Ovary (tissue), 10 donors: ENCODE measurements at regions of chr17 and their contacts with region 1.

Region 1: GRCh38 chr17:77420804-77421629 is 280.2 kb downstream of the SEC14L1 start:
- DNase-seq: peak; percentile 77 to 82 (median 80)
- H3K4me3 ChIP-seq: no peak overlapping the region
- H3K27ac ChIP-seq: peak overlapping the region; percentile 61 to 80
- H3K4me1 ChIP-seq: peaks cover 34% of the 10 kb centered on the region
- H3K27me3 ChIP-seq: no peaks in the 10 kb centered on the region
- CTCF ChIP-seq: no peak
- EP300 ChIP-seq: no peak
- POLR2A ChIP-seq: peak; percentile 7

Region 2: GRCh38 chr17:77372444-77373298 is 48.3 kb before region 1 on chr17:
- intact Hi-C with region 1: loop called in 3 of 4 experiments (anchors 5 to 10 kb)
- DNase-seq: peak; percentile 87 to 93 (median 90)
- H3K4me3 ChIP-seq: peak overlapping the region; percentile 73
- H3K27ac ChIP-seq: peak overlapping the region; percentile 77 to 89
- H3K4me1 ChIP-seq: peaks cover 41% of the 10 kb centered on the region
- H3K27me3 ChIP-seq: no peaks in the 10 kb centered on the region
- CTCF ChIP-seq: peak in 1 of 3 donors; percentile 12
- EP300 ChIP-seq: no peak
- POLR2A ChIP-seq: no peak

Region 3: DNA sequence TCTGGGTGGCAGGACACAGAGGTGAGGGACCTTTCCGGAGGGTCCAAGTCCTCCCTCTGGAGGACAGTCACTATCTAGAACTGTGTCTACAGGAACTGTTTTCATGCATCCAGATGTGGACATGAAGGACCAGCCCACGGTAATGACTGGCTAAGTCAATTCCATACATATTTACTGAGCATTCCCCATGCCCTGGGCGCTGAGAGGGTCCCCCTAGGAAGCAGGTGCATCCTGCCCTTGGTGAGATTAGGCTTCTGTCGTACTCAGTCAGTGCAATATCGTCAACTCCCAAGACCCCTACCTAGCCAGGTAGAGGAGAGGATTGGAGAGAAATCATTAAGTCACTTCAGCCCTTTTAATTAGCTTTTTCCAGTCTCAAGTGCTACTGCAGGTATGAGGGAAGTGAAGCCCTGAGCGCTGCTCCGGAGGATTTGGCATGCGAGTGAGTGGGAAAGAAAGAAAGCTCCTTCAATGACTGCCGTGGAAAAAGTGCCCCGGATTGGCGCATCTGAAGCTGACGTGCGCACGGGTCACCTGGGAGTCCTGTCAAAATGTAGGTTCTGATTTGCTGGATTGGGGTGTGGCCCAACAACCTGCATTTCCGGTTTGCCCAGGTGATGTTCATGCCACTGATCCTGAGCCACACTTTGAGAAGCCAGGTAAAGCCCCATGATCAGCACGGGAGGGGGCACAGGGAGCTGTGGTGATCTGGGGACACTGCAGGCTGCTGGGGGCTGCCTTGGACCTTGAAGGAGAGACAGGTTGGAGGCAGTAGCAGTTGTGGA is 170.1 kb after region 1 on chr17:
- intact Hi-C with region 1: no loop called
- DNase-seq: no peak
- H3K4me3 ChIP-seq: no peak overlapping the region
- H3K27ac ChIP-seq: no peak overlapping the region
- H3K4me1 ChIP-seq: no peaks in the 10 kb centered on the region
- H3K27me3 ChIP-seq: no peaks in the 10 kb centered on the region
- CTCF ChIP-seq: no peak
- EP300 ChIP-seq: no peak
- POLR2A ChIP-seq: no peak